Activated naive CD4-positive, alpha-beta T cell treated with anti-CD3 and anti-CD28 coated beads, Interleukin-2, amount 10 ng/mL, durations not matched to agents 7 days and 5 days (primary cell): ENCODE measurements at regions of chr17 and their contacts with region 1.

Region 1: DNA sequence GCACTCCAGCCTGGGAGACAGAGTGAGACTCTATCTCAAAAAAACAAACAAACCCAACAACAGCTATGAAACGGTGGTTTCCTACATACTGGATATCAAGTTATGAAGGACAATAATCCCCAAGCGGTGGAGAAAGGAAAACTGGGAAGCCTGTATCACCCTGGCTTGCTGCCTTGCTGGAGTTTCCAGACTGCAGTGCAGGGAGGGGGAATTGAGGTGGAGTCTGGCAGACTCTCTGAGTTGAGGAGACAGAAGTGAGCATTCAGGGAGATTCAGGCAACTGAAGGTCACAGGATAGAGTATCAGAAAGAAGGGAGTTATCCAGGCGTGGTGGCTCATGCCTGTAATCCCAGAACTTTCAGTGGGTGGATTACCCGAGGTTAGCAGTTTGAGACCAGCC is 11.9 kb downstream of the QRICH2 start:
- DNase-seq: no peak
- H3K4me3 Mint-ChIP-seq: no peak overlapping the region
- H3K27ac Mint-ChIP-seq: no peak overlapping the region
- H3K4me1 Mint-ChIP-seq: peaks cover 4% of the 10 kb centered on the region
- H3K27me3 Mint-ChIP-seq: no peaks in the 10 kb centered on the region

Region 2: DNA sequence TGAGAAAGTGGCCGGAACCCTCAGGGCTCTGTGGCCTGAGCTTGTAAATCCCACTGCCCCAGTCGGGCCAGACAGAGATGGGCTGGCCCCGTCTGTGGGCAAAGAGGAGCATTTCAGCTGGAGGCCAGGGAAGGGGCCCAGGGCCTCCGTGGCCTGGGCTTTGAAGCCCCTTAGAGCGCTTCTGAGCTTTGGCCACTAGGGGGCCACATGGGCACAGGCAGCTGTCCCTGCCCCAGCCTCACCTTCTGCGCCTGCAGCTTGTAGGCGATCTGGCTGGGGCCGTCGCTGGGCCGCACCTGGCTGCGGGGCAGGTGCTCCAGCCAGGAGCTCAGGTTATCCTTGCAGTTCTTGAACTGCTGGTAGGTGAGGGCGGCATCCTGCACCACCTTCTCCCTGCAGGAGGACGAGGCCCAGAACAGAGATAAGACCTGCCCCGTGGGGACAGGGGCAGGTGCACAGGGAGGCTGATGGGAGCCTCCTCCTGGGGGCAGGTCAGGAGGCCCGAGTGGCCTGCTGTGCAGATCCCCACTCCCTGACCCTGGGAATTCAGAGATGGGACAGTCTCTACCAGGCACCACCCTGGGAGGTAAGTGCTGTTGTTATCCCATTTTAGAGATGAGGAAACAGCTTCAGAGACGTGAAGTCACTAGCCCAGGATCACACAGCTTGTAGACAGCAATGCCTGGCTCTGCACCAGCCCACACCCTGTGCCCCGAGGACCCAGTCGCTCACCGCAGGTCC is 281.8 kb before region 1 on chr17:
- CTCF ChIA-PET with region 1: interaction called, 82 read pairs
- DNase-seq: peak; percentile 87
- H3K4me3 Mint-ChIP-seq: no peak overlapping the region
- H3K27ac Mint-ChIP-seq: peak overlapping the region; percentile 52
- H3K4me1 Mint-ChIP-seq: peaks cover 5% of the 10 kb centered on the region
- H3K27me3 Mint-ChIP-seq: peaks cover 28% of the 10 kb centered on the region

Region 3: DNA sequence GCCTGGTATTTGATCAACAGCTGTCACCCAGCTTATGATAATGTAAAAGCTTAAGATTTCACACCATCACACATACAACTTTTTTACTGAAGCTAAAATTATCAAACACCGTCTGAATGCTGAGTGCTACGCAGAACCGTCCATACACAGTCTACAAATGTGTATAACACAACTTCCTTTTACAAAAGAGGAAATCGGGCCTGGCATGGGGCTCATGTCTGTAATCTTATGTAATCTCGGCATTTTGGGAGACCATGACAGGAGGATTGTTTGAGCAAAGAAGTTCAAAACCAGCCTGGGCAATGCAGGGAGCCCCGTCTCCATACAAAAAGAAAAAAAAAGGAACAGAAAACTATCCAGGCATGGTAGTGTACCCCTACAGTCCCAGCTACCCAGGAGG is 31.5 kb after region 1 on chr17:
- CTCF ChIA-PET with region 1: no interaction called
- DNase-seq: no peak
- H3K4me3 Mint-ChIP-seq: no peak overlapping the region
- H3K27ac Mint-ChIP-seq: no peak overlapping the region
- H3K4me1 Mint-ChIP-seq: no peaks in the 10 kb centered on the region
- H3K27me3 Mint-ChIP-seq: no peaks in the 10 kb centered on the region